Naive thymus-derived CD4-positive, alpha-beta T cell (primary cell): ENCODE measurements at regions of chr13 and their contacts with region 1.

Region 1: DNA sequence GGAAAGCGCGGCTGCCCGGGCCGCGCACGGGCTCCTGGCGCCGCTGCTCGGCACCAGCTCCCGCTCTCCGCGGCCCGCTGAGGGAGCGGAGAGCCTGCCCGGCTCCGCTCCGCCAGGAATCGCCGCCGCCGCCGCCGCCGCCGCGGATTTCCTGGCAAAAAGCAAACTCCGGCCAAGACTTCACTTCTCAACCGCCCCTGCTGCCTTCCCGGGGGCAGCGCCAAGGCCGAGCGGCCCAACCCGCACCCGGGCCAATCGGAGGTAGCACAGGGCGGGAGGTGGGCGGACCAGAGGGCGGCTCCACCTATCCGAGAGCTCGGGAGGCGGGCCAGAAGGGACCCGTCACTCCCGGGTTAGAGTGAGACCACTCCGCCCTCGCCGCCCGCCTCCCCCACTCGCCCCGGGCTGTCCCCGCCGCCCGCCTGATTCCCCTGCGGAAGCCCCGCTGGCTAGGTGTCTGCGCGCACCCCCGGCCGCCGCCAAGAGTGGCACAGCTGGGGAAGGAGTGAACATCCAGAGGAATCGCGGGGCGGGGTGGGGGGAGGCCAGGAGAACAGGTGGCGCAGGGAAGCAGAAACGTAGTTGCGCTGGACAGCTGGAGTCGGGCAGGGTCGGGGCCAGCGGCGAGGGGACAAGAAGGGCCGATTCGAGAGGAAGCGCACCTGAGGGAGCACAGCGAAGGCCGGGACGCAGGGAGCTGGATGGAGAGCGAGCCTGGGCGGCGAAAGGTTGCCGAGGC is at the start of gene LNX2:
- DNase-seq: peak; percentile 94 to 98 (median 95)
- ATAC-seq: peak; percentile 92
- H3K4me3 ChIP-seq: peak within 1 kb of the TSS; percentile 95
- H3K4me3 Mint-ChIP-seq: peak within 1 kb of the TSS; percentile 90 to 96 (median 95)
- H3K27ac ChIP-seq: peak within 1 kb of the TSS; percentile 97
- H3K27ac Mint-ChIP-seq: peak within 1 kb of the TSS; percentile 87 to 98 (median 97)
- H3K4me1 ChIP-seq: peaks cover 32 to 33% of the 10 kb centered on the region in 2 donors
- H3K4me1 Mint-ChIP-seq: peaks cover 40 to 69% (median 63%) of the 10 kb centered on the region in 7 donors
- H3K27me3 ChIP-seq: no peaks in the 10 kb centered on the region
- H3K27me3 Mint-ChIP-seq: no peaks in the 10 kb centered on the region
- total RNA-seq, gene LNX2: 3.2 to 10.7 (median 7.1) TPM

Region 2: DNA sequence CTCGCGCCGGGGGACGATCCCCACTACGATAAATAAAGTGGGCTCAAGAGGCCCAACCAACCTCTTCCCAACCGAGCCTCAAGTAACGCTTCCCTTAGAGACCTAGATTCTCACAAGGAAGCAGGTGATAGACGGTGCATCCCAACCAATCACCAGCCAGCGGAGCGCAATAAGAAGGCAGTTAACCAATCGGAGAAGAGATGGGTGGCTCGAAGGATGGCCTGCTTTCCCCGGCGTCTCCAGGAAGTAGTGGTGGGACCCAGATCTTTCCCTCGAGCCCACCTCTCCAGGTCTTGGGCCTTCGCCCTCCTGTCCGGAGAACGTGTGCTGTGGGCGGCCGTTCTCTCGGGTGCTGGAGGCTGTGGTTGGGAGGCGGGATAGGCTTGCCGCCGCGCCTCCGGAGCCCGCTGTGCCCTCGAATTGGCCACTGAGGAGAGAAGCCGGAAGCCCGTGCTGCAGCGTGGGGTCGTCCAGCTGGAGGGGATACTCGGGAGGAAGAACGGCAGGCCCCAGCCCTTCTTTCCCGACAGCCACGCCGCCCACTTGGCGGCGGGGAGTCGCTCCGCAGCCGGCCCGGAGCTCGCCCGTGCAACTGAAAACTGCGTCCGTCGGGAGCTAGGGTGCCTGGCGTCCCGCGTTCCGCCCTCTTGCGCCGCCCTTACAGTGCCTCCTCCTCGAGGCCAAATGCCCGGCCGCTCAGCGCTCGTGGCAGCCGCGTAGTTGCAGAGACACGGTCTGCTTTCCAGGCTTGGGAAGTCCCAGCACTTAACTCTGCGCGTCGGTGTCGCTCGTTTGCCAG is 1398.6 kb before region 1 on chr13 and contains the start of gene RNF6:
- CTCF ChIA-PET with region 1: no interaction called
- POLR2A ChIA-PET with region 1: no interaction called
- intact Hi-C with region 1: loop called in 1 of 2 experiments (anchors 5 kb)
- DNase-seq: peak; percentile 83 to 92 (median 89)
- ATAC-seq: peak; percentile 95
- H3K4me3 ChIP-seq: peak within 1 kb of the TSS; percentile 96
- H3K4me3 Mint-ChIP-seq: peak within 1 kb of the TSS; percentile 95 to 100 (median 100)
- H3K27ac ChIP-seq: peak within 1 kb of the TSS; percentile 97
- H3K27ac Mint-ChIP-seq: peak within 1 kb of the TSS; percentile 93 to 100 (median 100)
- H3K4me1 ChIP-seq: peaks cover 16 to 17% of the 10 kb centered on the region in 2 donors
- H3K4me1 Mint-ChIP-seq: peaks cover 25 to 54% (median 49%) of the 10 kb centered on the region in 7 donors
- H3K27me3 ChIP-seq: no peaks in the 10 kb centered on the region
- H3K27me3 Mint-ChIP-seq: peaks cover 0 to 3% (median 0%) of the 10 kb centered on the region in 5 donors
- total RNA-seq, gene RNF6: 31.0 to 45.6 (median 44.6) TPM

Region 3: DNA sequence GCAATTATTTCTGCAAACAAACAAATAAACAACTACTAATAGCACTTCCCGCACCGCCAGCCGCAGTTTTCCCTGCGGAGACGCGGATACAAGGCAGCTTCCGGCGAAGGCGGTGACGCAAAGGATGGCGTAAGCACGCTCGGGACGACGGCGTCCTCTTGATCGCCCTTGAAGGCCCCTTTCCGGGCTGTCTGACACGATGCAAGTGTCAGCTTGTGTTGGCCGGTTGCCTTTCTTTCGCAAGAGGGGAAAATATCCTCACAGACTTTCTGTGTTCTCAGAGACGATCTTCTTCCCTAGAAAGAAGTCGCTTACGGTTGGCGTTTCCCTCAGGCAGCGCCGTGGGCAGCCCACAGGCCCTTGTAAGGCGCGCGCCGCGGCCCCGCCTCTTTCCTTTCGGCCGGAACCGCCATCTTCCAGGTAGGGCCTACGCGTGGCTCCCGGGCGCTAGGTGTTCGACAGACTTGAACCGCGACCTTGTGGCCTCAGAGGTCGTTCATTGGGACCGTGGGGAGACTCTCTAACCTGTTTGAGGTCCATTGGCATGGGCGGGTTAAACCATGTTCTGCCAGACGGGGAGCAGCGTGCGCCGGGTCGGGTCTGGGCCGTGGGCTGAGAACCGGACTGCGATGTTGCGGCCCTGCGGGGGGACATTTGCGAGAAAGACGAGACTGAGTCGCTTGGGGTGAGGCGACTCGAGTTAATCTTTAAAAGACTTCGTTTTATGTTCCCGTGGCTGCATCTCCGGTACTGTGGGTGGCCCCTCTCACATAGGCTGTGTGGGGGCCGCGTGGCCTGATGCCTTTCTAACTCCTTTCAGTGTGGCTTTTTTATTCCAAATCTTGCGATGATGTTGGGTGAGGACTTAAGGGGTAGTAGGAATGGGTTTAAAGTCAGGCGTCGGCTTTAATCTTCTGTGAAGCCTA is 369.1 kb before region 1 on chr13 and contains the start of gene RPL21:
- CTCF ChIA-PET with region 1: no interaction called
- POLR2A ChIA-PET with region 1: interaction called, 3 read pairs
- intact Hi-C with region 1: loop called (anchors 1 kb)
- DNase-seq: peak; percentile 85 to 95 (median 93)
- ATAC-seq: peak; percentile 95
- H3K4me3 ChIP-seq: peak within 1 kb of the TSS; percentile 82
- H3K4me3 Mint-ChIP-seq: peak within 1 kb of the TSS; percentile 93 to 99 (median 98)
- H3K27ac ChIP-seq: peak within 1 kb of the TSS; percentile 98
- H3K27ac Mint-ChIP-seq: peak within 1 kb of the TSS; percentile 98 to 100 (median 99)
- H3K4me1 ChIP-seq: peaks cover 29 to 35% of the 10 kb centered on the region in 2 donors
- H3K4me1 Mint-ChIP-seq: peaks cover 32 to 78% (median 49%) of the 10 kb centered on the region in 7 donors
- H3K27me3 ChIP-seq: no peaks in the 10 kb centered on the region
- H3K27me3 Mint-ChIP-seq: no peaks in the 10 kb centered on the region
- total RNA-seq, gene RPL21: 962 to 2,668 (median 2,384) TPM

Region 4: DNA sequence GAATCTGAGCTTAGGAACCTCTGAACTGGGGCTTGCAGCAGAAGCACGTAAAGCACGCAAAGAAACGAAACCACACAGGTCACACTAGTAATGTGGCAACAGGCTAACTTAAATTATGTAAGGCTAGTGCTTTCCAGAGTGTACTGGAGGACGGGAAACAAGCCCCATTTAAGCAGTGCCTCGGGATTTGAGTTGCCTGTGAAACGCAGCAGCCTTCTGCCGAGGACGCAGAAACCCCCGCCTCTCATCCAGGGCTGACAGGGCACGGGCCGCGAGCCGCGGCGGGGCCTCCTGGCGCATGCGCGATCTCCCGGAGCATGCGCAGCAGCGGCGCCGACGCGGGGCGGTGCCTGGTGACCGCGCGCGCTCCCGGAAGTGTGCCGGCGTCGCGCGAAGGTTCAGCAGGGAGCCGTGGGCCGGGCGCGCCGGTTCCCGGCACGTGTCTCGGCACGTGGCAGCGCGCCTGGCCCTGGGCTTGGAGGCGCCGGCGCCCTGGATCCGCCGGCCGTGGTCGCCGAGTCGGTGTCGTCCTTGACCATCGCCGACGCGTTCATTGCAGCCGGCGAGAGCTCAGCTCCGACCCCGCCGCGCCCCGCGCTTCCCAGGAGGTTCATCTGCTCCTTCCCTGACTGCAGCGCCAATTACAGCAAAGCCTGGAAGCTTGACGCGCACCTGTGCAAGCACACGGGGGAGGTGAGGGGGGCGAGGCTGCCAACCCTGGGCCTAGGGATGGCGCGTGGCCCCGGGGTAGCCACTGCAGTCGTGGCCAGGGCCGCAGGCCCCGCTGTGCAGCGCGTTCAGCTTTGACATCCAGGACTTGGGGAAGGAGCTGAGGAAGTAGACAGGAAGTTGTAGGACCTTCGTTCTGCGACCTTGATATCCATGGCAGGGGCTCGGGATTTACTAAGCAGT is 196.0 kb before region 1 on chr13 and contains the start of gene GTF3A:
- CTCF ChIA-PET with region 1: interaction called, 10 read pairs
- POLR2A ChIA-PET with region 1: interaction called, 86 read pairs
- intact Hi-C with region 1: loop called (anchors 1 kb)
- DNase-seq: peak; percentile 83 to 97 (median 93)
- ATAC-seq: peak; percentile 77
- H3K4me3 ChIP-seq: peak within 1 kb of the TSS; percentile 71
- H3K4me3 Mint-ChIP-seq: peak within 1 kb of the TSS; percentile 81 to 96 (median 92)
- H3K27ac ChIP-seq: peak within 1 kb of the TSS; percentile 86
- H3K27ac Mint-ChIP-seq: peak within 1 kb of the TSS; percentile 88 to 98 (median 95)
- H3K4me1 ChIP-seq: peaks cover 24 to 45% of the 10 kb centered on the region in 2 donors
- H3K4me1 Mint-ChIP-seq: peaks cover 27 to 47% (median 42%) of the 10 kb centered on the region in 7 donors
- H3K27me3 ChIP-seq: no peaks in the 10 kb centered on the region
- H3K27me3 Mint-ChIP-seq: no peaks in the 10 kb centered on the region
- total RNA-seq, gene GTF3A: 123 to 254 (median 206) TPM

Region 5: GRCh38 chr13:27533155-27533643 is 87.3 kb before region 1 on chr13:
- CTCF ChIA-PET with region 1: no interaction called
- POLR2A ChIA-PET with region 1: no interaction called
- intact Hi-C with region 1: loop called (anchors 1 to 2 kb)
- DNase-seq: peak in 7 of 9 donors; percentile 17 to 51 (median 42)
- ATAC-seq: peak; percentile 83
- H3K4me3 ChIP-seq: no peak overlapping the region
- H3K4me3 Mint-ChIP-seq: peak overlapping the region in 6 of 10 donors; percentile 26 to 52 (median 44)
- H3K27ac ChIP-seq: no peak overlapping the region
- H3K27ac Mint-ChIP-seq: no peak overlapping the region
- H3K4me1 ChIP-seq: peaks cover 0 to 9% of the 10 kb centered on the region in 2 donors
- H3K4me1 Mint-ChIP-seq: peaks cover 0 to 12% (median 10%) of the 10 kb centered on the region in 7 donors
- H3K27me3 ChIP-seq: no peaks in the 10 kb centered on the region
- H3K27me3 Mint-ChIP-seq: peaks cover 0 to 17% (median 5%) of the 10 kb centered on the region in 5 donors

Region 6: GRCh38 chr13:27712421-27712820 is 91.9 kb after region 1 on chr13:
- CTCF ChIA-PET with region 1: no interaction called
- POLR2A ChIA-PET with region 1: no interaction called
- intact Hi-C with region 1: loop called in 1 of 2 experiments (anchors 5 kb)
- DNase-seq: peak in 3 of 9 donors; percentile 24 to 29 (median 28)
- ATAC-seq: no peak
- H3K4me3 ChIP-seq: no peak overlapping the region
- H3K4me3 Mint-ChIP-seq: no peak overlapping the region
- H3K27ac ChIP-seq: no peak overlapping the region
- H3K27ac Mint-ChIP-seq: no peak overlapping the region
- H3K4me1 ChIP-seq: no peaks in the 10 kb centered on the region
- H3K4me1 Mint-ChIP-seq: no peaks in the 10 kb centered on the region
- H3K27me3 ChIP-seq: no peaks in the 10 kb centered on the region
- H3K27me3 Mint-ChIP-seq: peaks cover 13 to 29% (median 16%) of the 10 kb centered on the region in 5 donors

Region 7: DNA sequence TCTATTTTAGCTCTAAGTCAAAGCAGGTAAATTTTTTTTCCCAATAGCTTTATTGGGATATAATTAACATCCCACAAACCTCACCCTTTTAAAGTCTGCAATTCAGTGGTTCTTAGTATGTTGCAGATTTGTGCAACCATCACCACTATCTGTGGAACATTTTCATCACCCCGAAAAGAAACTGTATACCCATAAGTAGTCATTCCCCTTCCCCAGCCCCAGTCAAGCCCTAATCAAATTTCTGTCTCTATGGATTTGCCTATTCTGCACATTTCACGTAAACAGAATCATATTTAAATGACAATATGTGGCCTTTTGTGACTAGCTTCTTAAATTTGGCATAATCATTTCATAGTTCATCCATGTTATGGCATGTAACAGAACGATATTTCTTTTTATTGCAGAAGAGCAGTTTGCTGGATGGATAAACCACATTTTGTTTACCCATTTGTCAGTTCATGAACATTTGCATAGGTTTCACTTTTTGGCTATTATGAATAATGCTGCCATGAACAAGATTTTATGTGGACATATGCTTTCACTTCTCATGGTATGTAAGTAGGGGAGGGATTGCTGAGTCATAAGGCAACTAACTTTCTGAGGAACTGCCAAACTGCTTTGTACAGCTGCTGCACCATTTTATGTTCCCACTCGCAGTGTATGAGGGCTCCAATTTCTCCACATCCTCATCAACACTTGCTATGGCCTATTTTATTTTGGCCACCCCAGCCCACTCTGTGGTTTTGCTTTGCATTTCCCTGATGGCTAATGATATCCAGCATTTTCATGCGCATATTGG is 1087.3 kb after region 1 on chr13:
- CTCF ChIA-PET with region 1: no interaction called
- POLR2A ChIA-PET with region 1: no interaction called
- intact Hi-C with region 1: loop called in 1 of 2 experiments (anchors 2 kb)
- DNase-seq: no peak
- ATAC-seq: peak; percentile 64
- H3K4me3 ChIP-seq: no peak overlapping the region
- H3K4me3 Mint-ChIP-seq: peak overlapping the region in 1 of 10 donors; percentile 9
- H3K27ac ChIP-seq: no peak overlapping the region
- H3K27ac Mint-ChIP-seq: peak overlapping the region in 2 of 9 donors; percentile 33 to 60
- H3K4me1 ChIP-seq: no peaks in the 10 kb centered on the region
- H3K4me1 Mint-ChIP-seq: peaks cover 0 to 11% (median 3%) of the 10 kb centered on the region in 7 donors
- H3K27me3 ChIP-seq: no peaks in the 10 kb centered on the region
- H3K27me3 Mint-ChIP-seq: no peaks in the 10 kb centered on the region